ENCODE measurements at regions of chrX and their contacts with region 1.

Region 1: GRCh38 chrX:118495061-118495921 is at the start of gene DOCK11:
- DNase-seq: no peak
- ATAC-seq: peak; percentile 84
- H3K4me3 ChIP-seq: peak within 1 kb of the TSS; percentile 46 to 59
- H3K27ac ChIP-seq: no peak within 1 kb of the TSS
- H3K4me1 ChIP-seq: peaks cover 3 to 9% of the 10 kb centered on the region in 2 experiments; a peak in 1 of 4 replicates
- H3K27me3 ChIP-seq: no peaks in the 10 kb centered on the region; the same call in 1 of the 2 replicates
- CTCF ChIP-seq: no peak
- POLR2A ChIP-seq: no peak
- RAD21 ChIP-seq: no peak
- total RNA-seq, gene DOCK11: 0.59 TPM

Region 2: DNA sequence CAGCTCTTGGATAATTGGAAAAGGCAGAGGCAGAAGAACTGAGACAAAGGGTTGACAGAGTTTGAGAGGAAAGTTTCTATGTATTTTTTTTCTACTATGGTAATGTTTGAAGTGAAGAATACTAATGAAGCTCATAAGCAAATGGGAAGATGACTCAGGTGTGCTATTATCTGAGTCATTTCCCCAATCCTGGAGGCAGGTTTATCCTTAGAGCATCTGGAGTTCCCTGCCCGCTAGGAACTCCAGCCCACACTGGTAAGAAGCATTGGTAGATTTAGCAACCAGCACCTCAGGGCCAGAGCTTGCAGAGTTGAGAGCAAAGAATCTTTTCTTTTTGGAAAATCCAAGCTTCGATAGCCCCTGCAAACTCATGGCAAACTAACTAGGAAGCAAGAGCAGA is 55.5 kb after region 1 on chrX:
- CTCF ChIA-PET with region 1: no interaction called
- POLR2A ChIA-PET with region 1: no interaction called
- RAD21 ChIA-PET with region 1: no interaction called
- intact Hi-C with region 1: loop called (anchors 2 kb)
- DNase-seq: no peak
- ATAC-seq: no peak
- H3K4me3 ChIP-seq: no peak overlapping the region
- H3K27ac ChIP-seq: no peak overlapping the region
- H3K4me1 ChIP-seq: peaks cover 6 to 32% of the 10 kb centered on the region in 2 experiments
- H3K27me3 ChIP-seq: no peaks in the 10 kb centered on the region
- CTCF ChIP-seq: no peak
- POLR2A ChIP-seq: no peak
- RAD21 ChIP-seq: no peak